ENCODE measurements at regions of chr1 and their contacts with region 1.

Region 1: DNA sequence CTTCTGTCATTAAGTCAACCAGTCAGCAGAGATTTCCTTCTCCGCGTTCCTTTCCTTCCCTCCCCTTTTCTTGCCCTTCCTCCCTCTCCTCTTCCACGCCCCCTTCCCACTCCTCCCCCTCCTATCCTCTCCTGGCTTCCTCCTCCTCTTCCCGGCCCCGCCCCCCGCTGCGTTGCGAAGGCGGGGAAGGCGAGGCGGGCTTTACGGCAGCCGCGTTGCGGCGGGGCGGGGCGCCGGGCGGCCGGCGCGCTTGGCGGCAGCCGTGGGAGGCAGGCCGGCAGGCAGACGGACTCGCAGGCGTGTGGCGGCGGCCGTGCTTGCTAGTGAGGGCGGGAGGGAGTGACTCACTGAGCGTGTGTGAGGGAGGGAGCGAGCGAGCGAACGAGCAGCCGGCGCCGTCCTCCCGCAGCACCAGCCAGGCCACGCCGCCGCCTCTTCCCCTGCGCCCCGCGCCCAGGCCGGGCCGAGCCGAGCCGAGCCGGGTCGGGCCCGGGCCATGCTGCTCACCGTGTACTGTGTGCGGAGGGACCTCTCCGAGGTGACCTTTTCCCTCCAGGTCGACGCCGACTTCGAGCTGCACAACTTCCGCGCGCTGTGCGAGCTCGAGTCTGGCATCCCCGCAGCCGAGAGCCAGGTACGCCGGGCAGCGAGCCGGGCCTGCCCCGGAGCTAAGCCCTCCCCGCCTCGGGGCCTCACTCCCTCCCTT is at the start of gene DDI2:
- DNase-seq: peak; percentile 95
- H3K4me3 Mint-ChIP-seq: peak within 1 kb of the TSS; percentile 94
- H3K27ac Mint-ChIP-seq: peak within 1 kb of the TSS; percentile 94
- H3K4me1 Mint-ChIP-seq: peaks cover 44% of the 10 kb centered on the region
- H3K27me3 Mint-ChIP-seq: no peaks in the 10 kb centered on the region
- total RNA-seq, gene DDI2: 30.5 to 32.7 TPM

Region 2: GRCh38 chr1:15578921-15579682 is 38.2 kb before region 1 on chr1:
- CTCF ChIA-PET with region 1: no interaction called
- POLR2A ChIA-PET with region 1: interaction called, 27 read pairs
- DNase-seq: peak; percentile 63
- H3K4me3 Mint-ChIP-seq: peak overlapping the region; percentile 3
- H3K27ac Mint-ChIP-seq: peak overlapping the region; percentile 98
- H3K4me1 Mint-ChIP-seq: peaks cover 42% of the 10 kb centered on the region
- H3K27me3 Mint-ChIP-seq: no peaks in the 10 kb centered on the region

Region 3: DNA sequence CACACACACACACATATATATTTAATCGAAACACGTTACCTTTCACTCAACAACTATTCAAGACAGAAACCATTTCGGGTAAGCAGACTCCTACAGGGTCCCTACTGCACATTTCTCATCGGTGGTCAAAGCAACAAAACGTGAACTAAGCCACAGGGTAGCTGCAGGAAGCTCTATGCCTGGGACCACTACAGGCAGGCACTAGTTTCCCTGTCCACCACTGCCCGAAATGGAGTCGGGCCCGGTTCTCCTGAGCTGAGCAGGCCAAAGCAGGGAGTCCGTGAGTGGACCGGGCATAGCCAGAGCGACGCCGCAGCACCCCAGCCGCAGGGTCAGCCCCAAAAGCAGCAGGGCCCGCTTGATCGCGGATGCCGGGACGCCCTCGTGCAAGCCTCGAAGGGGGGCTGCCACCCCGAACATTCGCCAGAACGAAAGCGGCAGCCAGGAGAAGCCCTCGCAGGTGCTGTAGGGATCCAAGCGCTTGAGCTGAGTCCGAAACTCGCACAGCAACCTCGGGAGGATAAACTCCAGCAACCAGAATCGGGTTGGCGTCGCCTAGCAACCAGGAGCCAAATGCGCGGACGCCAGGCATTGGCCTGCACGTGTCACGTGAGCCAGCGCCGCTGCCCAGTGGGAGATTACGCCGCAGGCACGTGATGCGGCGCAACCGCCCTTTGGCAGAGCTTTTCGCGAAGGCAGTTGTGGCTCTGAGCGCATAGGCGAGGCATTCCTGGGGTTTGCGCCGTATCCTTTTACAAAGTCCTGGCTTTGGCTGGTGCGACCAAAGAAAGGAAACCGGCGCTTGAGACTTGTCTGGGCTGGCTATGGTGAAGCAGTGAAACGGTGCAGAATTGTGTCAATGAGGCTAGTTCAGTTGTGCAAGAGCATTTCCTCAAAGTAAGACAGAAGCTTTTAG is 14.0 kb before region 1 on chr1:
- CTCF ChIA-PET with region 1: interaction called, 6 read pairs
- POLR2A ChIA-PET with region 1: interaction called, 46 read pairs
- DNase-seq: peak; percentile 95
- H3K4me3 Mint-ChIP-seq: peak overlapping the region; percentile 57
- H3K27ac Mint-ChIP-seq: peak overlapping the region; percentile 9
- H3K4me1 Mint-ChIP-seq: peaks cover 13% of the 10 kb centered on the region
- H3K27me3 Mint-ChIP-seq: peaks cover 14% of the 10 kb centered on the region